A673 (cell line): ENCODE measurements at regions of chr4 and their contacts with region 1.

Region 1: GRCh38 chr4:45732161-45732560 is 391.7 kb downstream of the GABRG1 start:
- DNase-seq: no peak
- H3K4me3 ChIP-seq: no peak overlapping the region
- H3K27ac ChIP-seq: no peak overlapping the region
- H3K4me1 ChIP-seq: no peaks in the 10 kb centered on the region
- H3K27me3 ChIP-seq: no peaks in the 10 kb centered on the region
- CTCF ChIP-seq: no peak

Region 2: GRCh38 chr4:45453258-45453853 is 278.8 kb before region 1 on chr4:
- CTCF ChIA-PET with region 1: no interaction called
- POLR2A ChIA-PET with region 1: no interaction called
- intact Hi-C with region 1: loop called (anchors 10 kb)
- DNase-seq: peak; percentile 59
- H3K4me3 ChIP-seq: no peak overlapping the region
- H3K27ac ChIP-seq: no peak overlapping the region
- H3K4me1 ChIP-seq: no peaks in the 10 kb centered on the region
- H3K27me3 ChIP-seq: no peaks in the 10 kb centered on the region
- CTCF ChIP-seq: peak; percentile 69

Region 3: GRCh38 chr4:46073778-46074177 is 341.6 kb after region 1 on chr4:
- CTCF ChIA-PET with region 1: no interaction called
- POLR2A ChIA-PET with region 1: no interaction called
- intact Hi-C with region 1: no loop called
- DNase-seq: no peak
- H3K4me3 ChIP-seq: no peak overlapping the region
- H3K27ac ChIP-seq: no peak overlapping the region
- H3K4me1 ChIP-seq: no peaks in the 10 kb centered on the region
- H3K27me3 ChIP-seq: peaks cover 6% of the 10 kb centered on the region
- CTCF ChIP-seq: no peak

Region 4: GRCh38 chr4:47213971-47214370 is 1481.8 kb after region 1 on chr4:
- CTCF ChIA-PET with region 1: no interaction called
- POLR2A ChIA-PET with region 1: no interaction called
- intact Hi-C with region 1: no loop called
- DNase-seq: peak; percentile 56
- H3K4me3 ChIP-seq: no peak overlapping the region
- H3K27ac ChIP-seq: no peak overlapping the region
- H3K4me1 ChIP-seq: peaks cover 8% of the 10 kb centered on the region
- H3K27me3 ChIP-seq: no peaks in the 10 kb centered on the region
- CTCF ChIP-seq: no peak